Dorsolateral prefrontal cortex (tissue), 120 donors: ENCODE measurements at regions of chr15 and their contacts with region 1.

Region 1: GRCh38 chr15:50354838-50355618 is at the start of gene GABPB1:
- DNase-seq: peak; percentile 76 to 90 (median 84)
- H3K4me3 ChIP-seq: peak within 1 kb of the TSS; percentile 70 to 100 (median 93)
- H3K27ac ChIP-seq: peak within 1 kb of the TSS; percentile 87 to 100 (median 98)
- H3K27me3 ChIP-seq: no peaks in the 10 kb centered on the region
- CTCF ChIP-seq: peak in 14 of 56 donors; percentile 3 to 35 (median 10)
- total RNA-seq, gene GABPB1: 7.9 to 16.9 (median 11.0) TPM

Region 2: GRCh38 chr15:50149090-50149489 is 205.9 kb before region 1 on chr15:
- intact Hi-C with region 1: no loop called
- DNase-seq: no peak
- H3K4me3 ChIP-seq: no peak overlapping the region
- H3K27ac ChIP-seq: no peak overlapping the region
- H3K27me3 ChIP-seq: no peaks in the 10 kb centered on the region
- CTCF ChIP-seq: no peak

Region 3: DNA sequence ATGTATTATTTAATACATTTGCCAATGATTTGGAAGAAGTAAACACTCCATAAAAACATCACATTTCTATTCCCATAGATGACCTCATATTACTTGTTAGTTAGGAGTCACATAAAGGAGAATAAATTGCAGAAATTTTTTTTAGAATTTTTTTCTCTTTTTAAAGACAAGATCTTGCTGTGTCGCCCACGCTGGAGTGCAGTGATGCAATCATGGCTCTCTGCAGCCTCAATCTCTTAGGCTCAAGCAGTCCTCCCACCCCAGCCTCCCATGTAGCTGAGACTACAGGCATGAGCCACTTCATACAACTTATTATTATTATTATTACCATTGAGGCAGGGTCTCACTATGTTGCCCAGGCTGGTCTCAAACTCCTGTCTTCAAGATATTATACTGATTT is 56.8 kb after region 1 on chr15:
- intact Hi-C with region 1: no loop called
- DNase-seq: no peak
- H3K4me3 ChIP-seq: no peak overlapping the region
- H3K27ac ChIP-seq: no peak overlapping the region
- H3K27me3 ChIP-seq: no peaks in the 10 kb centered on the region
- CTCF ChIP-seq: no peak

Region 4: GRCh38 chr15:50424066-50424890 is 69.2 kb after region 1 on chr15 and contains the start of gene USP8:
- intact Hi-C with region 1: loop called (anchors 1 kb)
- DNase-seq: peak; percentile 91 to 98 (median 94)
- H3K4me3 ChIP-seq: peak within 1 kb of the TSS; percentile 61 to 100 (median 91)
- H3K27ac ChIP-seq: peak within 1 kb of the TSS; percentile 42 to 97 (median 88)
- H3K27me3 ChIP-seq: no peaks in the 10 kb centered on the region
- CTCF ChIP-seq: peak in 22 of 56 donors; percentile 7 to 49 (median 20)
- total RNA-seq, gene USP8: 53.7 to 94.5 (median 72.2) TPM

Region 5: GRCh38 chr15:50487287-50487686 is 132.3 kb after region 1 on chr15:
- intact Hi-C with region 1: no loop called
- DNase-seq: no peak
- H3K4me3 ChIP-seq: no peak overlapping the region
- H3K27ac ChIP-seq: no peak overlapping the region
- H3K27me3 ChIP-seq: no peaks in the 10 kb centered on the region
- CTCF ChIP-seq: no peak